ENCODE measurements at regions of chr1 and their contacts with region 1.

Region 1: GRCh38 chr1:101238681-101239094 is 1.9 kb downstream of the S1PR1 start:
- DNase-seq: peak; percentile 89
- ATAC-seq: peak; percentile 43
- H3K4me3 Mint-ChIP-seq: peak overlapping the region; percentile 99
- H3K27ac Mint-ChIP-seq: peak overlapping the region; percentile 96
- H3K4me1 Mint-ChIP-seq: peaks cover 49% of the 10 kb centered on the region
- H3K27me3 Mint-ChIP-seq: no peaks in the 10 kb centered on the region

Region 2: GRCh38 chr1:101136739-101137138 is 101.9 kb before region 1 on chr1:
- POLR2A ChIA-PET with region 1: interaction called, 19 read pairs
- DNase-seq: no peak
- ATAC-seq: peak; percentile 74
- H3K4me3 Mint-ChIP-seq: peak overlapping the region; percentile 65
- H3K27ac Mint-ChIP-seq: peak overlapping the region; percentile 79
- H3K4me1 Mint-ChIP-seq: peaks cover 51% of the 10 kb centered on the region
- H3K27me3 Mint-ChIP-seq: no peaks in the 10 kb centered on the region

Region 3: DNA sequence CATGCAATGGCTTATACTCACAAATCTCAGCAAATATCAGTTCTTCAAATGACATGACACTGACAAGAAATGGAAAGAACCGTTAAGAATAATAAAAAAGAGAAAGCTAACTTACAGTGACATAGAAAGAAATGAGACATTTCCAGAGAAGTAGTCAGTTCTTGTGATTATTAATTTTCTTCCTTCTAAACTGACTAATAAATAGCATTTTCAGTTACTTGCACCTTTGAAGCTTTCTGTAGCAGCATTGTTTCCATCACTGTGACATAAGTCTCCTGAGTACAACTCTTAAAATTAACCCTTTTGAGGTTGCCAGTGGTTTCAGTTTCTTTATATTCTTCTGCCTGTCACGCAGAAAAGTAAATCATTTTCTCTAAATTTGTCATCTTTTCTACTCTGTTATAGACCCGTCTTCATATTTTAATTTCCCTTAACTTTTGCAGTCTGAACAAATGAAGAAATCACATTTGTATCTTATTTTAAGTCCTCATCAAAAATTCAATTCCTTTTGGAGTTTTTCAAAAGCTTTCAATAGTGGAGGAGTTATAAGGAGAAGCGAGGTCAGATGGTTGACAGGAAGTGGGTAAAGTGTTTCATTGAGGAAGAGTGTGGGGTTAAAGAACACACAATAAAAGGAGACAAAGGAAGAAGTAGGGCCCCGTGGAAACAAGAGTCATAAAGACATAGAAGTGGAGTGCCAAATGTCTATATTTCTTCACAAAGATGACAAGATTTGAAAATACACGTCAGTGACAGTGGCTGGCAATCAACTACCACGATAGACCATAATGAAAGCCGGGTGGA is 59.8 kb before region 1 on chr1:
- POLR2A ChIA-PET with region 1: interaction called, 10 read pairs
- DNase-seq: no peak
- ATAC-seq: peak; percentile 84
- H3K4me3 Mint-ChIP-seq: peak overlapping the region; percentile 89
- H3K27ac Mint-ChIP-seq: peak overlapping the region; percentile 93
- H3K4me1 Mint-ChIP-seq: peaks cover 45% of the 10 kb centered on the region
- H3K27me3 Mint-ChIP-seq: no peaks in the 10 kb centered on the region

Region 4: DNA sequence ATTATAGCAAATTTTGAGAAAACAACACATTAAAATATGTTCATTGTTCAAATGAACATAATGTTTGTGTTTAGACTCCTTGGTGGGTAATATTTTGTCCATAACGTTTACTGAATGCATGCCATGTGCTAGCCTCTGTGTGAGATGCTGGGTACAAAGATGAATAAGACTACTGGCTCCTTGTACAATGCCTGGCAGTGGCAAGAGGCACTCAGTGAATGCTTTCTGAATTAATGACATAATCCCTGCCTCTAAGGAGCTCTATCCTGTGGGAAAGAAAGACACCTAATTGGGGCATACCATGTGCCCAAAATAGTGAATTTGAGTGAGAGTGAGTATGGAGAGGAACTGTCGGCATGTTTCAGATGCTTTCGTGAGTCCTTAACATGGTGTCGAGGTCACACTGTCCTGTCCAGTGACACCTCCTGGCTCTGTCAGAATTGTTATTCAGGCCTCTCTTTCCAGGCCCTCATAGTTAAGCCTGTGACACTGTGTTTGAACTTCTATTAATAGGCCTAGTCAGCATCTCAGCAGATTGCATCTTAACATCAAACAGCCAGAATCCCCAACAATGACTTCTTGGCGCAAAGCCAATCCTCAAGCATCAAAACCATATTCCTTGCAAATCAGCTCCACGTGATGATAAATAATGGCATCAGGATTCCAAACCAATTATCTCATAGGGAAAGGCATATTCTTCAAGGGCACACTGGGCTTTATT is 34.7 kb before region 1 on chr1:
- POLR2A ChIA-PET with region 1: no interaction called
- DNase-seq: no peak
- ATAC-seq: no peak
- H3K4me3 Mint-ChIP-seq: no peak overlapping the region
- H3K27ac Mint-ChIP-seq: no peak overlapping the region
- H3K4me1 Mint-ChIP-seq: peaks cover 6% of the 10 kb centered on the region
- H3K27me3 Mint-ChIP-seq: no peaks in the 10 kb centered on the region

Region 5: GRCh38 chr1:101275672-101276071 is 37.0 kb after region 1 on chr1:
- POLR2A ChIA-PET with region 1: no interaction called
- DNase-seq: no peak
- ATAC-seq: no peak
- H3K4me3 Mint-ChIP-seq: no peak overlapping the region
- H3K27ac Mint-ChIP-seq: no peak overlapping the region
- H3K4me1 Mint-ChIP-seq: peaks cover 34% of the 10 kb centered on the region
- H3K27me3 Mint-ChIP-seq: no peaks in the 10 kb centered on the region

Region 6: GRCh38 chr1:101288491-101288944 is 49.8 kb after region 1 on chr1:
- POLR2A ChIA-PET with region 1: interaction called, 11 read pairs
- DNase-seq: no peak
- ATAC-seq: peak; percentile 46
- H3K4me3 Mint-ChIP-seq: no peak overlapping the region
- H3K27ac Mint-ChIP-seq: peak overlapping the region; percentile 62
- H3K4me1 Mint-ChIP-seq: peaks cover 59% of the 10 kb centered on the region
- H3K27me3 Mint-ChIP-seq: peaks cover 2% of the 10 kb centered on the region

Region 7: DNA sequence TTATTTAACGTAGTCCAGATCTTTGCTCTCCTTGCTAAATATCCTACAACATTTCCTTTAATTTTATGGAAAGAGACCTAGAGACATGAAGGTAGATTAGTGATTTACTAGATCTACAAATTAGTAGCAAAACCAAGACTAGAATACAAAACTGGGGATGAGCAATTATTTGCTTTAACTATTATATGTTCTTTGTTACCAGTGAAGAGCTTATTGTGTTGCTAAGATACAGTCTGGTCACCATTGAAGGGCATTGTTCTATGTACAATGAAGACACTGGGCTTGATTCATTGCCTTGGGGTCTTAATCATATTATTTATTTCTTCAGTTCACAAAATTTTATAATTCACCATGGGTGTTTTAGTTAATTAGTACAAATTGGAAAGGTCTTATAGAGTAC is 86.5 kb after region 1 on chr1:
- POLR2A ChIA-PET with region 1: no interaction called
- DNase-seq: no peak
- ATAC-seq: no peak
- H3K4me3 Mint-ChIP-seq: no peak overlapping the region
- H3K27ac Mint-ChIP-seq: no peak overlapping the region
- H3K4me1 Mint-ChIP-seq: no peaks in the 10 kb centered on the region
- H3K27me3 Mint-ChIP-seq: peaks cover 12% of the 10 kb centered on the region

Region 8: GRCh38 chr1:101379950-101380349 is 141.3 kb after region 1 on chr1:
- POLR2A ChIA-PET with region 1: no interaction called
- DNase-seq: no peak
- ATAC-seq: peak; percentile 74
- H3K4me3 Mint-ChIP-seq: peak overlapping the region; percentile 31
- H3K27ac Mint-ChIP-seq: peak overlapping the region; percentile 68
- H3K4me1 Mint-ChIP-seq: peaks cover 17% of the 10 kb centered on the region
- H3K27me3 Mint-ChIP-seq: peaks cover 4% of the 10 kb centered on the region

Measured in activated naive CD8-positive, alpha-beta T cell treated with anti-CD3 and anti-CD28 coated beads, Interleukin-2, amount 10 ng/mL, durations not matched to agents 7 days and 5 days (primary cell).